Activated B cell treated with CpG ODN at 0.5 μM for 24 hours (primary cell): ENCODE measurements at regions of chr10 and their contacts with region 1.

Region 1: DNA sequence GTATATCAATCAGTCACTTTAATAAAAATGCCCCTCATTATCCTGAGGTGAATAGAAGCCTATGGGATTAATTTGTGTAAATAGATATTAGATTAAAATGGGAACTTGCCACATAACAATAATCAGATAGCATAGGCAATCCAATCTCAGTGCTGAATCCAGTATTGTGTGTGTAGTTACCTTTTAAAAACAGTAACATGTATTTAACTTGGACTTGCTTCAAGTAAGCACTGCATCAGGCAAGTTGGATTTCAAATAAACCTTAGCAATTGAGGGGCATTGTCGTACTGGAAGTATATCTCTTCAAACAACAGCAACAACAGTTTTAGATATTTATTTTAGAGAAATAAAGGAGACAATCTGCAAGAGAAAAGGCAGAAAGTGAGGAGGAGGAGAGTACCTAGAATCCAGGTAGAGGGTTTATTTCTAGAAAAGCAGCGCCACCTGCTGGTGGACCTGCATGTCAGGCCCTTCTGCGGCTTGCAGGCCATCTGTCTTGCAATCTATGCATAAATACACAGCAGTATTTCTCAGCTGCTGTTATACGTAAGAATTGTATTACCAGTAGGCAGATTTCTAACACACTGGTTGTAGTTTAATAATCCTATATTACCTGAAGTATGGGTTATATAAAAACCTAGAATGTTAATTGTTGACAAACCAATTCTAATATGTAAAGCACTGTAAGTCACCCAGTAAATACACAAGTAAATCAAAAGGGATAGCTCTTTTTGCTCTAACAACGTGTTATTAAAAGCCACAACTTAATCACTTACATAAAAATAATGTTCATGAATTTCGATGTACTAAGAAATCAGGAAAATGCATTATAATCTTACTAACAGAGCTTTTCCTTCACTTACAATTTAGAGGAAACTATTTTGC is 652.8 kb downstream of the KCNMA1 start:
- DNase-seq: peak; percentile 32
- ATAC-seq: no peak
- H3K4me3 Mint-ChIP-seq: no peak overlapping the region
- H3K27ac Mint-ChIP-seq: no peak overlapping the region
- H3K4me1 Mint-ChIP-seq: no peaks in the 10 kb centered on the region
- H3K27me3 Mint-ChIP-seq: no peaks in the 10 kb centered on the region
- CTCF ChIP-seq: peak; percentile 52

Region 2: GRCh38 chr10:76036111-76036940 is 948.5 kb before region 1 on chr10:
- CTCF ChIA-PET with region 1: no interaction called
- POLR2A ChIA-PET with region 1: no interaction called
- intact Hi-C with region 1: loop called (anchors 10 kb)
- DNase-seq: no peak
- ATAC-seq: peak; percentile 31
- H3K4me3 Mint-ChIP-seq: no peak overlapping the region
- H3K27ac Mint-ChIP-seq: no peak overlapping the region
- H3K4me1 Mint-ChIP-seq: no peaks in the 10 kb centered on the region
- H3K27me3 Mint-ChIP-seq: peaks cover 2% of the 10 kb centered on the region
- CTCF ChIP-seq: no peak

Region 3: GRCh38 chr10:76547352-76547972 is 437.3 kb before region 1 on chr10:
- CTCF ChIA-PET with region 1: no interaction called
- POLR2A ChIA-PET with region 1: no interaction called
- intact Hi-C with region 1: loop called (anchors 2 kb)
- DNase-seq: no peak
- ATAC-seq: no peak
- H3K4me3 Mint-ChIP-seq: no peak overlapping the region
- H3K27ac Mint-ChIP-seq: no peak overlapping the region
- H3K4me1 Mint-ChIP-seq: no peaks in the 10 kb centered on the region
- H3K27me3 Mint-ChIP-seq: no peaks in the 10 kb centered on the region
- CTCF ChIP-seq: peak; percentile 15

Region 4: DNA sequence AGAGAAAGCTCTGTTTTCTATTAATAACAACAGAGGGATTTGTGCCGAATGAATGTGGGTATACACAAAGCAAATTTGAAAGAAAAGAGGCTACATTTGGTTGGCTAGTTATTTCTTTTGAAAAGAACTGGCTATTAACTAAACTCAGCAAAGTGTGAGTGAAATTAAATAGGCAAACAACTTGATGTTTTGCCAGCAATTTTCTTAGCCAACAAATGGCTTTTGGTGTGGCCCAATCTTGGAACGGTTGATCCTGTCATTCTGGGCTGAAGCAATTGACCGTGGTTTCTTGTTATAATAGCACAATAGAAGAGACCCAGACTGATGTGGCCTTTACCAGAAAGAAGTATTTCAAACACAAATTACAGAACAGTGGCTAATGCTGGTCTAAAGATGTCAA is 245.8 kb before region 1 on chr10:
- CTCF ChIA-PET with region 1: no interaction called
- POLR2A ChIA-PET with region 1: no interaction called
- intact Hi-C with region 1: no loop called
- DNase-seq: no peak
- ATAC-seq: no peak
- H3K4me3 Mint-ChIP-seq: no peak overlapping the region
- H3K27ac Mint-ChIP-seq: no peak overlapping the region
- H3K4me1 Mint-ChIP-seq: peaks cover 3% of the 10 kb centered on the region
- H3K27me3 Mint-ChIP-seq: no peaks in the 10 kb centered on the region
- CTCF ChIP-seq: no peak